Psoas muscle (tissue), 8 donors: ENCODE measurements at regions of chr2 and their contacts with region 1.

Region 1: GRCh38 chr2:8681786-8682692 is at the start of gene ID2:
- DNase-seq: peak; percentile 99
- ATAC-seq: peak; percentile 85 to 91 (median 88)
- H3K4me3 ChIP-seq: peak within 1 kb of the TSS; percentile 79
- H3K27ac ChIP-seq: peak within 1 kb of the TSS; percentile 93
- H3K4me1 ChIP-seq: peaks cover 18% of the 10 kb centered on the region
- H3K27me3 ChIP-seq: peaks cover 0 to 2% (median 0%) of the 10 kb centered on the region in 3 donors
- CTCF ChIP-seq: no peak
- total RNA-seq, gene ID2: 4.1 to 15.4 (median 11.8) TPM

Region 2: DNA sequence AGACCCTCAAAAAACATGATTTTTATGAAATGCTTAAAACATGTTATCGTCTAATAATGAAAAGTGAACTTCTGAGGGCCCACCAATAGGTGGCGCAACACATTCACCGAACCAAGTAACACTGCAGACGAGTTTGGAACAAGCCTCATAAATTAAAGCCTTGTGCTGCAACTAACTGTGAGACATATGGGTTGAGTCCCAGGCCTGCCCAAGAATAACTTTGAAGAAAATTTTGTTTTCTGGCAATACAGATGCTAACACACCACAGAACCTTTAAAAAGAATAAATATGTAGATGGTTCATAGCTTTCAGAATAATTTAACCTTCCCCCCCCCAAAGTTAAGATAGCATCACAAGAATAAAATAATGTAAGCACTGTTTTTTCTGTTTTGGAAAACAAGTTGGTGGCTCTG is 1479.0 kb before region 1 on chr2:
- intact Hi-C with region 1: loop called (anchors 2 to 10 kb)
- DNase-seq: peak in 1 of 2 donors; percentile 23
- ATAC-seq: peak in 2 of 4 donors; percentile 43 to 53
- H3K4me3 ChIP-seq: no peak overlapping the region
- H3K27ac ChIP-seq: no peak overlapping the region
- H3K4me1 ChIP-seq: no peaks in the 10 kb centered on the region
- H3K27me3 ChIP-seq: no peaks in the 10 kb centered on the region
- CTCF ChIP-seq: peak; percentile 85

Region 3: GRCh38 chr2:7956126-7956689 is 725.8 kb before region 1 on chr2:
- intact Hi-C with region 1: loop called in 1 of 2 experiments (anchors 5 kb)
- DNase-seq: no peak
- ATAC-seq: no peak
- H3K4me3 ChIP-seq: no peak overlapping the region
- H3K27ac ChIP-seq: no peak overlapping the region
- H3K4me1 ChIP-seq: no peaks in the 10 kb centered on the region
- H3K27me3 ChIP-seq: peaks cover 0 to 5% (median 0%) of the 10 kb centered on the region in 3 donors
- CTCF ChIP-seq: no peak

Region 4: GRCh38 chr2:8215159-8215863 is 466.7 kb before region 1 on chr2:
- intact Hi-C with region 1: loop called in 1 of 2 experiments (anchors 10 kb)
- DNase-seq: no peak
- ATAC-seq: no peak
- H3K4me3 ChIP-seq: no peak overlapping the region
- H3K27ac ChIP-seq: no peak overlapping the region
- H3K4me1 ChIP-seq: peaks cover 10% of the 10 kb centered on the region
- H3K27me3 ChIP-seq: no peaks in the 10 kb centered on the region
- CTCF ChIP-seq: no peak

Region 5: DNA sequence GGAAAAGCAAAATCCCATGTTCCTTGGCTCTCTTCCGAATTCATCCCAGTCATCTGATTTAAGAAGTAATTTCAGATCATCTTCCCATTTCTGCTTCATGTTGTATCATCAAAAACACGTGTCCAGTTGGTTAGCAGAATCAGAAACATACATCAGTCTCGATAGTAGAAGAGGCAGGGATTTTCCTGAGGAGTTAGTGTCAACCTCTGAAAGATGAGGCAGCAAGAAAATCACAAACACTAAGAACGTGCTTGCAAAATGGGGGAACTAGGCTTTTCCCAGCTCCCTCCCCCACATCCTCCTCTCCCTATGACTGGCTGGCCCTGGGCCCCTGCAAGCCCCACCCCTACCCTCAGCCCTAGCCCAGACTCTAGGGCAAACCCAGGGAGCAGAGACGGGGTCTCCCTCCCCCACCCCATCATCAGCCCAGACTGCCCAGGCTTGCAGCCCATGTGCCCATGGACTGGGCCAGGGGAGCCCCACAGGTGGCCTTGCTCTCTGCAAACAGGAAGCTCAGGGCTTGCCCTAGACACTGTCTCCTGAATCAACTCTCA is 161.2 kb before region 1 on chr2:
- intact Hi-C with region 1: loop called in 1 of 2 experiments (anchors 5 kb)
- DNase-seq: no peak
- ATAC-seq: no peak
- H3K4me3 ChIP-seq: no peak overlapping the region
- H3K27ac ChIP-seq: no peak overlapping the region
- H3K4me1 ChIP-seq: peaks cover 4% of the 10 kb centered on the region
- H3K27me3 ChIP-seq: no peaks in the 10 kb centered on the region
- CTCF ChIP-seq: no peak